Activated T-helper 2 cell treated with anti-CD3 and anti-CD28 coated beads, Interferon-gamma antibody, Interleukin-2, Interleukin-4, amounts not matched to agents 10 μg/mL and 5 μg/mL and 100 μg/mL, durations not matched to agents 14 hours and 24 hours and 36 hours (primary cell): ENCODE measurements at regions of chr1 and their contacts with region 1.

Region 1: DNA sequence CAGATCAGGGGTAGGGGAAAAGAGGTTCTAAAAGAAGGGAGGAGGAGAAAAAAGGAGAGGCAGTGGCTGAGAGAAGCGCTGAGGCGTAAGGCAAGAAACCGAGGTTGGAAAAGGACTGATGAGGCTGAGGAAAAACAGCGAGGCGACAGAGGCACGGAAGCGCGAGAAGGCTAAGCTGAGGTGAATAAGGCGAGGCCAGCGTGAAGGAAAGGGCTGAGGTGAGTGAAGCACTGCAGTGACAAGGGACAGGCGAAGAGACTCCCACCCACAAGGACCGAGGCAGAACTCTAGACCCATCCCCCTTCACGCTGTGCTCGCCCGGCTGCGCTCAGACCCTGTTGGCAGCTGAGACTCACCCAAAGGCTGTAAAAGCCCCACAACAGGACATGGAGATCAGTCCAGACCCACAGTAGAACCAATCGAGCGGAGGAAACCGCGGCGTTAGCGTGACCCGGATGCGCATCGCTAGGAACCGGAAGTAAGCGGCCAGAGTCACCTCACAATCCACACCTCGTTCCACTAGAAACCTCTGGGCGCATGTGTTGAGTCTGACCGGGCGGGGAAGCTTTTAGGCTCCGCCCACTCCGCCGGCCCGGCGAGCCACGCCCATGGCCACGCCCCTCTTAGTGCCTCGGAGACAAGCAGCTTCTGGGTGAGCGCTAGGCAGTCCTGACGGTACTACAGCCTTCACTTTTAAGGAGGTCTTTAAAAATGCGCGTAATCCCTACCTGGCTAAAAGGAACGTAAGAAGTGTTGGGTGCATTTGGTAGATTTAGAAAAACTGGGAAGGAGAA is at the start of gene EYA3:
- DNase-seq: peak; percentile 100
- H3K4me3 Mint-ChIP-seq: peak within 1 kb of the TSS; percentile 92
- H3K27ac Mint-ChIP-seq: peak within 1 kb of the TSS; percentile 87
- H3K4me1 Mint-ChIP-seq: peaks cover 22% of the 10 kb centered on the region
- H3K27me3 Mint-ChIP-seq: peaks cover 7% of the 10 kb centered on the region
- total RNA-seq, gene EYA3: 27.5 and 30.9 TPM in 2 replicates

Region 2: GRCh38 chr1:27858072-27858958 is 230.1 kb before region 1 on chr1:
- intact Hi-C with region 1: loop called (anchors 10 kb)
- DNase-seq: peak; percentile 73
- H3K4me3 Mint-ChIP-seq: no peak overlapping the region
- H3K27ac Mint-ChIP-seq: no peak overlapping the region
- H3K4me1 Mint-ChIP-seq: peaks cover 9% of the 10 kb centered on the region
- H3K27me3 Mint-ChIP-seq: no peaks in the 10 kb centered on the region

Region 3: DNA sequence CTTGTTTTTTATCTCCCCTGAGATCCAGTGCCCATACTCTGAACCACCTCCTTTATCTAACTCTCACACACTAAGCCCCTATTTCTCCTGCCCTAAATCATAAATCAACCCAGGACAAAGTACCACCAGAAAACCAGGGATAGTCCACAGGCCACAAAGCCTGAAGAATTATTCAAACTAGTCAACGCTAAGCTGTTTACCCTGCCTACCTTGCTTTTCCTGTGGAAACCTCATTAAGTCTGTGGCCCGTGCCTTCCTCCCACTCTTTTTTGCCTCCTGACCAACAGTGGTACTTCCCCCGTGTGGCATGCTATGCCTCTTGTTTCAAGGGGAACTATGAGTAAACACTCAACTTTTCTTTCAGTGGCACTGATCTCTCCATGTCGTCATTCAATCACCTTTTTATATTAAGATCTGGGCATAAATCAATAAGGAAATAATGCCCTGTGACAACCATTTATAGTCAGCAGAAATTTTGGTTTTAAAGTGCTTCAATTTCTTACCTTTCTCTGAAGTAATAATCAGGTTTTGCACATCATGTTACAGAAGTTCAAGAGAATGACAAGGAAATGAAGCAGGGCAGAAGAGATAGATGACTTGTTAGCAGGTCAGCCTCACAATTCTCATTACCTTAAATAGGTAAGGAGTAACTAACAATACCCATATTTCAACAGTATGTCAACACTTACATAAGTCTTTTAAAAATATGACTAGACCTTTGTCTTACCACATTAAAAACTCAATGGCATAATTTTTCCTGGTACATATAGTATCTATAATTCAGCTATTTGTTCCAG is 32.0 kb before region 1 on chr1:
- intact Hi-C with region 1: loop called (anchors 1 kb)
- DNase-seq: peak; percentile 20
- H3K4me3 Mint-ChIP-seq: peak overlapping the region; percentile 57
- H3K27ac Mint-ChIP-seq: peak overlapping the region; percentile 86
- H3K4me1 Mint-ChIP-seq: peaks cover 37% of the 10 kb centered on the region
- H3K27me3 Mint-ChIP-seq: no peaks in the 10 kb centered on the region

Region 4: GRCh38 chr1:28172713-28173150 is 84.4 kb after region 1 on chr1:
- intact Hi-C with region 1: loop called (anchors 2 kb)
- DNase-seq: peak; percentile 65
- H3K4me3 Mint-ChIP-seq: peak overlapping the region; percentile 10
- H3K27ac Mint-ChIP-seq: no peak overlapping the region
- H3K4me1 Mint-ChIP-seq: peaks cover 37% of the 10 kb centered on the region
- H3K27me3 Mint-ChIP-seq: peaks cover 56% of the 10 kb centered on the region

Region 5: GRCh38 chr1:28199328-28200233 is 111.2 kb after region 1 on chr1:
- intact Hi-C with region 1: loop called (anchors 2 kb)
- DNase-seq: peak; percentile 74
- H3K4me3 Mint-ChIP-seq: peak overlapping the region; percentile 71
- H3K27ac Mint-ChIP-seq: peak overlapping the region; percentile 87
- H3K4me1 Mint-ChIP-seq: peaks cover 40% of the 10 kb centered on the region
- H3K27me3 Mint-ChIP-seq: peaks cover 5% of the 10 kb centered on the region

Region 6: GRCh38 chr1:28208818-28209441 is 120.6 kb after region 1 on chr1:
- intact Hi-C with region 1: loop called (anchors 1 kb)
- DNase-seq: peak; percentile 44
- H3K4me3 Mint-ChIP-seq: no peak overlapping the region
- H3K27ac Mint-ChIP-seq: no peak overlapping the region
- H3K4me1 Mint-ChIP-seq: peaks cover 14% of the 10 kb centered on the region
- H3K27me3 Mint-ChIP-seq: no peaks in the 10 kb centered on the region

Region 7: GRCh38 chr1:28329395-28330153 is 241.2 kb after region 1 on chr1:
- intact Hi-C with region 1: no loop called
- DNase-seq: no peak
- H3K4me3 Mint-ChIP-seq: peak overlapping the region; percentile 93
- H3K27ac Mint-ChIP-seq: peak overlapping the region; percentile 97
- H3K4me1 Mint-ChIP-seq: peaks cover 28% of the 10 kb centered on the region
- H3K27me3 Mint-ChIP-seq: no peaks in the 10 kb centered on the region